Calu3 (cell line): ENCODE measurements at regions of chr16 and their contacts with region 1.

Region 1: DNA sequence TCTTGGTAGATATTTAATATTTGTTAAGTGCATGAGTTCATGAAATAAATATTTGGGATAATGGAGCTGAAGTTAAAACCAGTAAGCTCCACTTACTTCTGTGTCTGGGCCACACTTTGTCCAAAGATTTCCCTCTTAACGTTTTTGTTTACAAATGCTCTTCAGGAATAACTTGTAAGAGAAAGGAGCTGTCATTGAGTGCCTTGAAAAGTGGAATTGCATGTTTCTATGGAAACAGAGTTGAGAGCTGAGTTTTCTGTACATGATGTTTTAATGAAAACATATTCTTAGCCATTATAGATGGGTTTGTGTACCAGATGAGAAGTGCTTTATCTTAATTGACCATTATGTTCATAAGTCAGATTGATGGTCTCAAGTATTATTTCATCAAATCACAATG is 1045.4 kb upstream of the EEF2KMT start:
- DNase-seq: no peak
- H3K4me3 Mint-ChIP-seq: no peak overlapping the region
- H3K27ac Mint-ChIP-seq: no peak overlapping the region
- H3K4me1 Mint-ChIP-seq: no peaks in the 10 kb centered on the region
- H3K27me3 Mint-ChIP-seq: no peaks in the 10 kb centered on the region
- CTCF ChIP-seq: no peak

Region 2: DNA sequence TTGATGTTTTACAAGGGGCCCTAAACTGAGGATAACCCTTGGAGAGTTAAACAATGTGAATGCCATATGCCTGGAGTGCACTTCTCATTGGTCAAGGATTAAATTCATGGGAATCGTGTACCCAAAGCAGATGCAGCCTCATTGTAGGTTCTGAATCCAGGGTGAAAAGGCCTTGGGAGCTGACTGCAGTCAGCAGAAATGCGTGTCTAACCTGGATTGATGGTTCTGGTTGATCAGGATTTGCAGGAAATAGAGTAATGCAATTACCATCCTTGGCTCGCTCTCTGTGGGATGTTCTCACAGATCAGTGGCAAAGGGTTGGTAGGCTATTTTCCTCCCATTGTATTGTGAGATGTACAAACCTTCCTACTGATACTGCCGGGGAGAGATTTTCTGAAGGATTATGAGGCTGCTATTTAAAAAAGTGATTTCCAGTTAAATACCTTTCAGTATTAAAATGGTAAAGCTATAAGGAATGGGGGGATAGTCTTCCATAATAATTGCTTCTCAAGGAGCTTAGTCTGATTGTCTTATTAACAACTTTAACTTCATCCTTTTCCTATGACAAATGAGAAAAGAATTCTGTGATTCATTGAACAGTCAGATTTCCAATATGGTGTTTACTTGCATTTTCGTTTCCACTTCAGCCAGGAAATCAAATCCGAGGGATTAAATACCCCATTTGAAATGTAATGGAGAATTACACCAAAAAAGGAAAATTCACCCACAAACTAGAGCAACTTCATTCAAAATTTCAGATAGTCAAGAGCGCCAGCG is 17.3 kb before region 1 on chr16:
- CTCF ChIA-PET with region 1: interaction called, 3 read pairs
- intact Hi-C with region 1: loop called (anchors 2 kb)
- DNase-seq: no peak
- H3K4me3 Mint-ChIP-seq: no peak overlapping the region
- H3K27ac Mint-ChIP-seq: no peak overlapping the region
- H3K4me1 Mint-ChIP-seq: no peaks in the 10 kb centered on the region
- H3K27me3 Mint-ChIP-seq: no peaks in the 10 kb centered on the region
- CTCF ChIP-seq: no peak